Activated CD4-positive, alpha-beta T cell treated with anti-CD3 and anti-CD28 coated beads, Interleukin-2, amount 10 ng/mL, durations not matched to agents 24 days and 14 days (primary cell): ENCODE measurements at regions of chr6 and their contacts with region 1.

Region 1: GRCh38 chr6:18115356-18115755 is 7.1 kb downstream of the NHLRC1 start:
- DNase-seq: peak; percentile 70
- H3K4me3 Mint-ChIP-seq: peak overlapping the region; percentile 24
- H3K27ac Mint-ChIP-seq: peak overlapping the region; percentile 1
- H3K4me1 Mint-ChIP-seq: peaks cover 11% of the 10 kb centered on the region
- H3K27me3 Mint-ChIP-seq: peaks cover 57% of the 10 kb centered on the region

Region 2: DNA sequence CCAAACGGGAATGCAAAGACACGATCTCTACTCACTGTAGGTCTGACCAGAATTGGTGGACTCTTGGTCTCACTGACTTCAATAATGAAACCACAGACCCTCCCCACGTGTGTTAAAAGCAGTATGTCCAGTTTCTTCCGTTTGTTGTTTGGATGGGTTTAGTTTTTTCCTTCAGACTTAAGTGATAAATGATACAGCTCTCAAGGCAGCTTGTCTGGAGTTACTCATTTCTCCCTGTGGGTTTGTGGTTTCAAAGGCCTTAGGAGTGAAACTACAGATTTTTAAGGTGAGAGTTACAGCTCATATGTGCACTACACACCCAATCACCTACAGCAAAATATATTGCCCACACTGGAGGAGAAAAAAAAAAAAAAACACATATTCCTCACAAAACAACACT is 1100.2 kb before region 1 on chr6:
- intact Hi-C with region 1: loop called (anchors 10 kb)
- DNase-seq: peak; percentile 71
- H3K4me3 Mint-ChIP-seq: peak overlapping the region; percentile 52
- H3K27ac Mint-ChIP-seq: no peak overlapping the region
- H3K4me1 Mint-ChIP-seq: peaks cover 10% of the 10 kb centered on the region
- H3K27me3 Mint-ChIP-seq: peaks cover 37% of the 10 kb centered on the region

Region 3: DNA sequence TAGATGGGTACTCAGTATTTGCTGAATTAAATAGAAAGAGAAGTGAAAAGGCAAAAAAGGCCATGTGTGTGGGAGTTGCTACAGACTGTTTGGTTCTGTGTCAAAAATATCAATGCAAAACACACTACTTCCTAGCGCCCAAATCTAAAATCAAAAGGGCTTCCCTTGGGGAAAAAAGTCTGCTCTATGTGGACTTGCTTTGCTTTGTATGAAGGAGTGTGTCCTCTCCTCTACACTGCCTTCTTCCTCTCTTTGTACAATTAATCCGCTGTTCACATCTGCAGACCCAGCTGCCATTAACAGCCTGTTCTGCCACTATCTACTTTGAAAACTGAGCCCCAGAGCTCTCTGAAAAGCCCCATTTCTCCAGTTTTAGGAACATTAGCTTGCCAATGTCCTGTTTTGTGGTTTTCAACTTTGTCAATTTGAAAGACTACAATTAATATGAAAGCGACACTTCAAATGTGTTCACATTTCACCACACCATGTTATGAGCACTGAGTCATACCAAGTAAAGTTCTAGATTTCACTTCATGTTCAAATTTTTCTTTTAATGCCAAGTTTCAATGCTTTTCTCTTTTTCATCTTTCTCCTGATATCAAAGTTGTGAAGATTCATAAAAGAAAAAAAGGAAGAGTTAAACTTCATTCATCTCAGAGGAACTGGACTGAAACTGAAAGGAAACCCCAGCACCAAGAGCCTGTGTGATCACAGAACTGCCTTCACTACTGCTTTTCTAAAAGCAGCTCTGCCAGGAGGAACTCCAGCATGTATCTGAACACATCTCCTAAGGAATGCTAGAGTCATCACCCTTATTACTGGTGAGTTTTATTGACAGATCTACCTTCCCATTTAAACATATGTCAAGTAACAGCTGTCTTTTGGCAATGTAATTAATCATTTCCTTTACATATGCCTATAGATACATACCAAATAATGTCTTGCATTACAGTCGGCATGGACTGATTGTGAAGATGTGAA is 230.6 kb before region 1 on chr6:
- intact Hi-C with region 1: loop called (anchors 10 kb)
- DNase-seq: no peak
- H3K4me3 Mint-ChIP-seq: no peak overlapping the region
- H3K27ac Mint-ChIP-seq: no peak overlapping the region
- H3K4me1 Mint-ChIP-seq: peaks cover 12% of the 10 kb centered on the region
- H3K27me3 Mint-ChIP-seq: peaks cover 33% of the 10 kb centered on the region

Region 4: DNA sequence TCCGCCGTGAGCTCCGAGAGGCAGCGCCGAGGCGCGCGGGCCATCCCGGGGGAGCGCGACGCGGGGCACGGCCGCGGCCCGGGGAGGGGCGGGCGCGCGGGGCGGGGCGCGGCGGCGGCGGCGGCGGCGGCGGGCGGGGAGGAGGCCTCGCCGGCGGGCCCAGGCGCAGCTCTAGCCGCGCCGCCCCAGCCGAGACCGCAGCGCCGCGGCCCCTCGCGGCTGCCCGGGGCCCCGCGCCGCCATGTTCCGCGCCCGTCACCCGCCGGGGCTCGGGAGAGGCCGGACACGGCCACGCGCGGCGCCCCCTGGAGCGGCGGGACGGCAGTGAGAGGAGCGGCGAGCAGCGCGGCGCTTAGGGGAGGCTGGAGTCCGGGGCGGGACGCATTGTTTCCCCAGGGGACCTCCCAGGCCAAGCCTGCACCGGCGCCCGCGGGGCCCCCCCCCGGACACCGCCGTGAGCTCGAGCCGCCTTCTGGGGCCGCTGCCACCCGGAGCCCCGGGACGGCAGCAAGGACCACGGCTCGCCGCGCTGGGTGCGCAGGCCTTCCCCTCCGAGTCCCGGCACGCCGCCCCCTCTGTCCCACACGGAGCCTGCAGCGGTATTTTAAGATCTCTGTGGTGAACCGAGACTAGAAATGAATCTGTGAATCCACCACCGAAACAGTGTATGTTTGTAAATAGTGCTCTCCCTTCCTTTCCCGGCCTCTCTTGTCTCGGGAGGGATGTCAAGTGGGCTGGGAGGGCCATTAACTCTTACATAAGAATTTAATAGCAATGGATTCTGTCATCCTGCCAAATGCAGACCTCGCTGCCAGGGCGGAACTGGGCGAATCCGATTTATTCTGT is 127.6 kb before region 1 on chr6 and contains the start of gene KIF13A:
- intact Hi-C with region 1: loop called (anchors 5 kb)
- DNase-seq: peak; percentile 73
- H3K4me3 Mint-ChIP-seq: peak within 1 kb of the TSS; percentile 81
- H3K27ac Mint-ChIP-seq: no peak within 1 kb of the TSS
- H3K4me1 Mint-ChIP-seq: peaks cover 9% of the 10 kb centered on the region
- H3K27me3 Mint-ChIP-seq: peaks cover 63% of the 10 kb centered on the region
- total RNA-seq, gene KIF13A: not detected in 2 replicates

Region 5: DNA sequence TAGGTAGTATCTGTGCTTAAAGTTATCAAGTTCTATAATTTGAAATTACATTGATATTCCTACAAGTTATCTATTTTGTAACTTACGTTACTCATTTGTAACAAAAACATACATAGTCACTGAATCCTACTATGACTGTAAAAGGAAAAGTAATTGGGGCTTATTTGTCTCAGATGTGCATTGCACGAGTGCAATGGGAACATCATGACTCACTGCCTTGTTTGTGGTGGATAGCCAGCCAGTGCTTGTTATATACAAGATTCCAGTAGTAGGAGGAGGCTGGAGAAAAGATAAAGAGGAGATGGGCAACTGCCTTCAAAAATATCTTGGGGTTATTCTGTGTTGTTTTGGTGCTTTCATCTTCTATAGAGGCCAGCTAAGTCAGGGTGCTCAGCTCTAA is 435.9 kb after region 1 on chr6:
- intact Hi-C with region 1: no loop called
- DNase-seq: no peak
- H3K4me3 Mint-ChIP-seq: no peak overlapping the region
- H3K27ac Mint-ChIP-seq: no peak overlapping the region
- H3K4me1 Mint-ChIP-seq: no peaks in the 10 kb centered on the region
- H3K27me3 Mint-ChIP-seq: no peaks in the 10 kb centered on the region